ENCODE measurements at regions of chr14 and their contacts with region 1.

Region 1: GRCh38 chr14:91286530-91286937 is 42.0 kb upstream of the GPR68 start:
- DNase-seq: peak; percentile 50 to 82 (median 72)
- ATAC-seq: peak in 3 of 4 donors; percentile 67 to 75 (median 68)
- H3K4me3 ChIP-seq: no peak overlapping the region
- H3K27ac ChIP-seq: no peak overlapping the region
- H3K4me1 ChIP-seq: peaks cover 0 to 21% (median 6%) of the 10 kb centered on the region in 12 donors
- H3K27me3 ChIP-seq: no peaks in the 10 kb centered on the region
- CTCF ChIP-seq: peak; percentile 81 to 95 (median 88)
- POLR2A ChIP-seq: no peak

Region 2: GRCh38 chr14:90894241-90894640 is 392.3 kb before region 1 on chr14:
- intact Hi-C with region 1: loop called in 1 of 10 experiments (anchors 5 kb)
- DNase-seq: no peak
- ATAC-seq: no peak
- H3K4me3 ChIP-seq: no peak overlapping the region
- H3K27ac ChIP-seq: no peak overlapping the region
- H3K4me1 ChIP-seq: peaks cover 0 to 7% (median 0%) of the 10 kb centered on the region in 12 donors
- H3K27me3 ChIP-seq: no peaks in the 10 kb centered on the region
- CTCF ChIP-seq: no peak
- POLR2A ChIP-seq: no peak

Region 3: DNA sequence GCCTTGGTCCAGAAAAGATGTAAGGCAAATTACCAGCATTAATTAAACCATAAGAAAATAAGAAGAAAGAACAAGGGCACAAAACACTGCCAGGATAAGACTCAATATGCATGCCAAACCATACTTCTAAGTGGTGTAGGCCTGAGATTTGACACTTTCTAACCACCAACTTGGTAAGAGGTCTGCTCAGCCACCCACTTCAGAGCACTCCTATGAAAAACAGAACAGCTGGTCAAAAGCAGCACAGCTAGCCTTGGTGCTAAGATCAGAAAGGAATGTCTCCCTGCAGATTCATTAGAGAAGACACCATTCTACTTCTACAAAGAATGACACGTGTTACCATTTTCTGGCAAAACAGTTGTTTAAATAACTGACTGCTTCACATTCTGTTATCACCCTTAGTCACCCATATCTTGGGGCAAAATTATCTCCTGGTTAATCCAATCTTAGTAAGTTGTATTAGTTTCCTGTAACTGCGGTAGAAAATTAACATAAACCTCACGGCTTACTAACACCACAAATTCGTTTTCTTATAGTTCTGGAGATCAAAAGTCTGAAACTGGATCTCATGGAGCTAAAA is 239.3 kb before region 1 on chr14:
- intact Hi-C with region 1: no loop called
- DNase-seq: no peak
- ATAC-seq: no peak
- H3K4me3 ChIP-seq: no peak overlapping the region
- H3K27ac ChIP-seq: no peak overlapping the region
- H3K4me1 ChIP-seq: peaks cover 0 to 5% (median 0%) of the 10 kb centered on the region in 12 donors
- H3K27me3 ChIP-seq: no peaks in the 10 kb centered on the region
- CTCF ChIP-seq: no peak
- POLR2A ChIP-seq: no peak

Region 4: DNA sequence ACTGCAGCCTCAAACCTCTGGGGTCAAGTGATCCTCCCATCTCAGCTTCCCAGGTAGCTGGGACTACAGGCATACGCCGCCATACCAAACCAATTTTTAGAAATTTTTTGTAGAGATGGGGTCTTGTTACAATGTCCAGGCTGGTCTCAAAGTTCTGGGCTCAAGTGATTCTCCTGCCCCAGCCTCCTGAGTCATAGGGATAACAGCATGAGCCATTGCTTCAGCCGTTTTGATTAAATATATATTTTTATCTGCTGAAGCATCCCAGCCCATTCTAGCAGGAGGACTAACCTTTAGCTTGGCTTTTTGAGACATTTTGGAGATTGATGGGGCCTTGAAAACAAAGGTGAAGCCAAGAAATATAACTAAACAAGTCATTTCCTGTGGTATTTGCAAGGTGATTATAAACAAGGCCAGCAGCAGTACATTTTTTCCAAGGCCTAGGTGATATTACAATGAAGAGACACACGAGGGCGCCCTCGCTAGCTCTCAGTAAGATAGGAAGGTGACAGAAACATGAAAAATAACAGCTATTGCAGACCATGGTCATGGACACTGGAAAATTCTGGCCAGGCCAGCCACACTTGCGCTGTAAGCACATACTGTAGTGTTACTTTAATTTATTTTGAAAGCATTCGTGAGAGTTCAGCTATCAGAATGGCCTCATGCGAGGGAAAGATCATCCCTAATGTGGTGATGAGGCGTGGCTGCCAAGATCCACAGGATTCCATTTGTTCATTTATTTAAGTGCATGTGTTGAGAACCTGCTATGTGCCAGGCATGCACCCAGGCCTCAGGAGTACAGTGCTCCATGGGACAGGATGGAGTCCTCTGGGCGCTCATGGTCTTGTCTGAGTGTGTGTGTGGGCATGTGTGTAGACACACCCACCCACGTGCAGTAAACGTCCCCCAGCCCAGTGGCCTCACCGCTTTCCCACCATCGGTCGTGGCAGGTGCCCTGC is 109.2 kb before region 1 on chr14:
- intact Hi-C with region 1: loop called (anchors 1 to 5 kb)
- DNase-seq: peak in 4 of 5 donors; percentile 32 to 49 (median 46)
- ATAC-seq: peak; percentile 31 to 67 (median 50)
- H3K4me3 ChIP-seq: no peak overlapping the region
- H3K27ac ChIP-seq: peak overlapping the region in 3 of 12 donors; percentile 12 to 37 (median 26)
- H3K4me1 ChIP-seq: peaks cover 0 to 14% (median 6%) of the 10 kb centered on the region in 12 donors
- H3K27me3 ChIP-seq: no peaks in the 10 kb centered on the region
- CTCF ChIP-seq: peak; percentile 58 to 80 (median 73)
- POLR2A ChIP-seq: no peak

Measured in heart left ventricle (tissue), 16 donors.